Mammary epithelial cell (primary cell): ENCODE measurements at regions of chr18 and their contacts with region 1.

Region 1: DNA sequence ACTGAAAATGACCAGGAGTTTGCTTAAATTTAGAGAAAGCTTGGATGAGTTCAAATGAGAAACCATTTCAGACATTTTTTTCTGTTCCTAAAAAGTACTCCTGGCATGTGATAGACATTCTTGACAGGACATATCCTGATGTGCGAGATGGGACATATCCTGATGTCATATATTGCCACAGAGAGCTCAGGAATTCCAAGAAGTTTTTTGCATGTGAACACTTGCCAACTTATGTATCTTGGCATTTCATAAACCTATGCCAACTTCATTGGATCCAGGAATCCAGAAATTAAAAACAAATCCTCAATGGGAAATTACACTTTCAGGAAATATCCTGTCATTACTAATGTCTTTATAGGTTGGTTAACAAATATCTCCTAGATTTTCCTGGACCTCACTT is 2.9 kb upstream of the SERPINB3 start:
- DNase-seq: no peak
- H3K4me3 ChIP-seq: no peak overlapping the region
- H3K27ac ChIP-seq: peak overlapping the region; percentile 40
- H3K4me1 ChIP-seq: peaks cover 21% of the 10 kb centered on the region
- H3K27me3 ChIP-seq: no peaks in the 10 kb centered on the region
- CTCF ChIP-seq: no peak

Region 2: GRCh38 chr18:63617049-63617914 is 47.3 kb before region 1 on chr18:
- CTCF ChIA-PET with region 1: no interaction called
- dilution Hi-C with region 1: no loop called
- in situ Hi-C with region 1: no loop called
- intact Hi-C with region 1: no loop called
- DNase-seq: no peak
- H3K4me3 ChIP-seq: no peak overlapping the region
- H3K27ac ChIP-seq: no peak overlapping the region
- H3K4me1 ChIP-seq: no peaks in the 10 kb centered on the region
- H3K27me3 ChIP-seq: no peaks in the 10 kb centered on the region
- CTCF ChIP-seq: no peak

Region 3: GRCh38 chr18:63646921-63647320 is 17.6 kb before region 1 on chr18:
- CTCF ChIA-PET with region 1: no interaction called
- dilution Hi-C with region 1: no loop called
- in situ Hi-C with region 1: no loop called
- intact Hi-C with region 1: loop called (anchors 2 kb)
- DNase-seq: no peak
- H3K4me3 ChIP-seq: no peak overlapping the region
- H3K27ac ChIP-seq: no peak overlapping the region
- H3K4me1 ChIP-seq: peaks cover 8% of the 10 kb centered on the region
- H3K27me3 ChIP-seq: no peaks in the 10 kb centered on the region
- CTCF ChIP-seq: no peak